SK-N-SH (cell line): ENCODE measurements at regions of chr7 and their contacts with region 1.

Region 1: DNA sequence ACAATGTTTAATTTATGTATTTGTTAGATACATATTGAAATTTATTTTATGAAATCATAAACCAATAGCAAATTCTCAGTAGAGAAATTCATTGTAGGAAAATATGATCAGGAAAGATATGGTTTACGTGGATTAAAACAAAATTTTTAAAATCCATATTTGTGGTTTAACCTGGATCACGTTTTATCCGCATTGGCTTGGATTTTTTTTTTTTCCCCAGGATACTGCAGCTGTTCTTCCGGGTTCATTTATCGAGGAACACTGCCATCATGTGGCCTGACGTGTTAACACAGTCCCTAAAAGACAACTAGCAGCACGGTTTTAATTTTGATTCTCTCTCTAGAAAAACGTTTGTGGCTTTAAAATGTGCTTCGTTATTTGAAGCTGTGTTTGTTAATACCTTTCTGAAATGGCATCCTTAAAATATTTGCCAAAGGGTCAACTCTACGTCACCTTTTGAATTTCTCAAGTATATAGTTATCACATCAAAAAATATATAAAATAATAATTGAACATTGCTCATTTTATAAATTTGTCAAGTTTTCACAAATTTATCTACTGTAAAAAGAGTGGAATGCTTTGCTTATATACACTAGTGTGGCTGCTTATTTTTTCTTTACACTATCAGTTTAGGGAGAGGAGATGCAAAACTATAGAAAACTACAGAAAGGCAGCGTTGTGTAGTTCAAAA is 8.7 kb upstream of the ASB4 start:
- DNase-seq: peak; percentile 73
- H3K4me3 ChIP-seq: no peak overlapping the region
- H3K27ac ChIP-seq: no peak overlapping the region
- H3K4me1 ChIP-seq: peaks cover 0 to 8% of the 10 kb centered on the region in 2 experiments; a peak in 2 of 4 replicates
- H3K27me3 ChIP-seq: no peaks in the 10 kb centered on the region
- CTCF ChIP-seq: peak; percentile 98
- EP300 ChIP-seq: no peak
- RAD21 ChIP-seq: peak; percentile 98

Region 2: GRCh38 chr7:94503097-94503496 is 974.0 kb before region 1 on chr7:
- CTCF ChIA-PET with region 1: no interaction called
- POLR2A ChIA-PET with region 1: no interaction called
- DNase-seq: no peak
- H3K4me3 ChIP-seq: no peak overlapping the region
- H3K27ac ChIP-seq: no peak overlapping the region
- H3K4me1 ChIP-seq: no peaks in the 10 kb centered on the region; a peak in 1 of 4 replicates
- H3K27me3 ChIP-seq: no peaks in the 10 kb centered on the region
- CTCF ChIP-seq: no peak
- EP300 ChIP-seq: no peak
- RAD21 ChIP-seq: no peak

Region 3: DNA sequence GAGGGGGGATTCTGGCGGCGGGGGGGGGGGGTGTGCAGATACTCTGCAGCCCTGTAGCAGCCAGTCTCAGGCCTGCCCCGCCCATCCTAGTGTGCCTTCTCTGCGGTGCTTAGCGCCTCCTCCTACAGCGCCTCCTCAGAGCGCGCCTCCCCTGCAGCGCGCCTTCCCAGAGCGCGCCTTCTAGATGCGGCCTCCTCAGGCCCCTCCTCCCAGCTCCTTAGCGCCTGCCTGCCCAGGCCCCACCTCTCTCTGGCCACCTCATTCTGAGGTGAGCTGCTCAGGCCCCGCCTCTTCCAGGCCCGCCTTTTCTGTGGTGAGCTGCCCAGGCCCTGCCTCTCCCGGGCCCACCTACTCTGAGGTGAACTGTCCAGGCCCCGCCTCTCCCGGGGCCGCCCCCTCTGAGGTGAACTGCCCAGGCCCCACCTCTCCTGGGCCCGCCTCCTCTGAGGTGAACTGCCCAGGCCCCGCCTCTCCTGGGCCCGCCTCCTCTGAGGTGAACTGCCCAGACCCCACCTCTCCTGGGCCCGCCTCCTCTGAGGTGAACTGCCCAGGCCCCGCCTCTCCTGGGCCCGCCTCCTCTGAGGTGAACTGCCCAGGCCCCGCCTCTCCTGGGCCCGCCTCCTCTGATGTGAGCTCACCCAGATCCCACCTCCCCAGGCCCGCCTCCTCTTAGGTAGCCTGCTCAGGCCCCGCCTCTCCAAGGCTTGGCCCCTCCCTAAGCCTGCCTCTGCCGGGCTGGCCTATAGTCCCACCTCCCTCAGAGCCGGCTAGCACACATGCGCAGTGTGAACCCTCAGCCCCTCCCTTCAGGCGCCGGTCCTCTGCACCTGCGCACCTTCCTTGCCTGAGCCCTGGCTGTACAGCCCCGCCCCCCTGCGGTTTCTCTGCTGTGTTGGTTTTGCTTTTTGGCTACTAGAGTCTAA is 819.0 kb before region 1 on chr7:
- CTCF ChIA-PET with region 1: interaction called, 11 read pairs
- POLR2A ChIA-PET with region 1: no interaction called
- DNase-seq: peak; percentile 87
- H3K4me3 ChIP-seq: peak overlapping the region in 1 of 2 experiments; percentile 94; a peak in 2 of 4 replicates
- H3K27ac ChIP-seq: peak overlapping the region in 1 of 2 experiments; percentile 12; a peak in 1 of 4 replicates
- H3K4me1 ChIP-seq: peaks cover 10 to 15% of the 10 kb centered on the region in 2 experiments; a peak in 3 of 4 replicates
- H3K27me3 ChIP-seq: no peaks in the 10 kb centered on the region
- CTCF ChIP-seq: no peak
- EP300 ChIP-seq: no peak
- RAD21 ChIP-seq: peak; percentile 10; the same call in 1 of the 2 replicates

Region 4: DNA sequence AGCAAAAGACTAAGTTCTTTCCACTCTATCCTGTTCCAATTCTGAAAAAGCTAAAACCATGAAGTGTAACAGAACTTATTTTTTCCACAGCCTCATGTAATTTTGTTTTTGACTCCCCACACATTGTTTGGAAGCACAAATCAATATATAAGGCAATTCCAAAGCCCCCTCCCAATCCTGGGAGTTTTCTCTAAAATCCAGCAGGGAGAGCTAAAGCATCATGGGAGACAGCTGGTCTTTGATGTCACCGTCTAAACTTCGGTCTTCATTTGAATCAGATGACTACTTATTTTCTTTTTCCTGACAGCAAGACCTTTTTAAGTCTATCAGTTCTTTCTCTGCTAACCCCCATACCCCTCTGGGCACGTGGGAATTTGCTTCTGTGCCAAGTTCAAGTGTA is 119.4 kb before region 1 on chr7:
- CTCF ChIA-PET with region 1: interaction called, 10 read pairs
- POLR2A ChIA-PET with region 1: no interaction called
- DNase-seq: no peak
- H3K4me3 ChIP-seq: no peak overlapping the region
- H3K27ac ChIP-seq: no peak overlapping the region
- H3K4me1 ChIP-seq: no peaks in the 10 kb centered on the region
- H3K27me3 ChIP-seq: no peaks in the 10 kb centered on the region
- CTCF ChIP-seq: no peak; the same call in 1 of the 2 replicates
- EP300 ChIP-seq: no peak
- RAD21 ChIP-seq: peak; percentile 45

Region 5: DNA sequence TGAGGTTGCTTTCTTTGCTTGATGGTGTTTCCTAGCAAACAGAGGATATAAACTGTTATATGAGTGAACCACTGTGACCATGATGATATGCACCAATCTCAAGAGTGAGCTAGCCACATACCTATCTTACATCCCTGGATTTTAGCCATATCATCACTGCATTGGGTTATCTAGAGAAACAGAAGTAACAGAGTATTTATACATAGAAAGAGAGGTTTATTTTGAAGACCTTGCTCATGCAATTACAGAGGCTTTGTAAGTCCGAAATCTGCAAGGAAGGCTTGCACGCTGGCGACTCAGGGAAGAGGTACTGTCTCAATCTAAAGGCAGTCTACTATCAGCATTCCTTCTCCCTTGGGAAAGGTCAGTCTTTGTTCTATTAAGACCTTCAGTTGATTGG is 30.4 kb before region 1 on chr7:
- CTCF ChIA-PET with region 1: interaction called, 16 read pairs
- POLR2A ChIA-PET with region 1: no interaction called
- DNase-seq: no peak
- H3K4me3 ChIP-seq: no peak overlapping the region
- H3K27ac ChIP-seq: no peak overlapping the region
- H3K4me1 ChIP-seq: no peaks in the 10 kb centered on the region
- H3K27me3 ChIP-seq: no peaks in the 10 kb centered on the region
- CTCF ChIP-seq: no peak
- EP300 ChIP-seq: no peak
- RAD21 ChIP-seq: no peak

Region 6: DNA sequence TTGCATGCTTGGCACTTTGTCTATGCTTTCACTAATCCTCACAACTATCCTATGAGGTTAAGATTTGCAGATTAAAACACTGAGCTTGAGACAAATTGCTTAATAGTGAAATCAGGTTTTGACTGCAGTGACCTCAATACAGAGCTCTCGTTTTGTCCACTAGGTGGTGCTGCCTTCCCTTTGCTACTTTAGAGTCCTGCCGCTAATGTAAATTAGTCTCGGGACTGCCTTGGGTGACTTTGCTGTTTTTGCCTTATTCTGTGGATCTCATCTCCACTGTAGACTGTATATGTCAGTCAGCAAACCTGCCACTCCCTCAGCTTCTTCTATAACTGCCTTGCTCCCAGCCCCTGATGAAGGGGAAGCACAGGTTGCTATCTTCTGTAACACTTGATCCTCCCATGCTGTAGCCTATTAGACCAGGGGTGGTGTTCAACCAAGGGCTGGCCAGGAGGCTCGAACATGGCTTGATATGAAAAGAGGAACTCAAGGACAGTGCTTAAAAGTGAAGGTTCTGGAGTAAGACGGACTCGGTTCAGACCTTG is 34.7 kb after region 1 on chr7:
- CTCF ChIA-PET with region 1: interaction called, 21 read pairs
- POLR2A ChIA-PET with region 1: no interaction called
- DNase-seq: peak; percentile 48
- H3K4me3 ChIP-seq: no peak overlapping the region; a peak in 1 of 4 replicates
- H3K27ac ChIP-seq: no peak overlapping the region
- H3K4me1 ChIP-seq: peaks cover 0 to 4% of the 10 kb centered on the region in 2 experiments; a peak in 2 of 4 replicates
- H3K27me3 ChIP-seq: peaks cover 9% of the 10 kb centered on the region; the same call in 1 of the 2 replicates
- CTCF ChIP-seq: peak; percentile 99
- EP300 ChIP-seq: no peak
- RAD21 ChIP-seq: peak; percentile 74

Region 7: DNA sequence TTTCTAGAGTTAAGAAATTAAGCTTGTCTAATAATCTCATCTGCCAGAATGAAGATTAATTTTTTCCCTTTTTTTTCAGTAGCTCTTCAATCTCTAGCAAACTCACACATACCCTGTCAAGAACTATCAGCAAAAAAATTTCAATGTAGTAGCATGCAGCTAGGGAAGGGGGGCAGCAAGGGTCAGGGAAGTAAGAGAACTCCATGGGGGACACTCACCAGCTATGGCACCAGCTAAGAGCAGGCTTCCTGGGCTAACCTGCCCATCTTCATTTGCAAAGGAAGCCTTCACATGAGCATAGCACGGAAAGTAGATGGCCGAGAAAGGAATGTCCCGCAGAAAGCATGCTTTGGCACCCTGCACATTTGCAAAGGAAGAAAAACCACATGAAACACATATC is 654.5 kb after region 1 on chr7:
- CTCF ChIA-PET with region 1: no interaction called
- POLR2A ChIA-PET with region 1: no interaction called
- DNase-seq: no peak
- H3K4me3 ChIP-seq: no peak overlapping the region
- H3K27ac ChIP-seq: no peak overlapping the region
- H3K4me1 ChIP-seq: peaks cover 0 to 7% of the 10 kb centered on the region in 2 experiments; a peak in 2 of 4 replicates
- H3K27me3 ChIP-seq: no peaks in the 10 kb centered on the region
- CTCF ChIP-seq: no peak
- EP300 ChIP-seq: no peak
- RAD21 ChIP-seq: 0 out of 2 replicates have a peak, but pooled peaks have one; percentile 8

Region 8: DNA sequence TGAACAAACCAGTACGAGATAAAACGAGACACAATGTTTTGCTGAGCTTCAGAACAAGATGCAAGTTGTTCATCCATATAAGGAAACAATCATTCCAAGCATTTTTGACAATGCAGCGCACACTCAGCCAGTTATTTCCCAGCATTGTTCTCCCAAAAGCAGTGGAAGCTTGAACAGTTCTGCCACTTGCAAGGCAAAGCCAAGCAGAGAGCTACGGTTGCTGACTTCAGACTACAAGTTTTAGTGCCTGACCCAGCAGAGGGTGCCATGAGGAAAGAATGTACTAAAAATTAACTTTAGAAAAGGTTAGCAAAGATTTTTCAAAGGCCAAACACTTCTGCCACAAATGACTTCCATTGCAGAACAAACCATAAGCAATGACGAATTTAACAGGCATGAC is 692.4 kb after region 1 on chr7:
- CTCF ChIA-PET with region 1: no interaction called
- POLR2A ChIA-PET with region 1: no interaction called
- DNase-seq: no peak
- H3K4me3 ChIP-seq: no peak overlapping the region
- H3K27ac ChIP-seq: no peak overlapping the region
- H3K4me1 ChIP-seq: no peaks in the 10 kb centered on the region
- H3K27me3 ChIP-seq: no peaks in the 10 kb centered on the region
- CTCF ChIP-seq: no peak
- EP300 ChIP-seq: no peak
- RAD21 ChIP-seq: no peak